ENCODE measurements at regions of chr1 and their contacts with region 1.

Region 1: DNA sequence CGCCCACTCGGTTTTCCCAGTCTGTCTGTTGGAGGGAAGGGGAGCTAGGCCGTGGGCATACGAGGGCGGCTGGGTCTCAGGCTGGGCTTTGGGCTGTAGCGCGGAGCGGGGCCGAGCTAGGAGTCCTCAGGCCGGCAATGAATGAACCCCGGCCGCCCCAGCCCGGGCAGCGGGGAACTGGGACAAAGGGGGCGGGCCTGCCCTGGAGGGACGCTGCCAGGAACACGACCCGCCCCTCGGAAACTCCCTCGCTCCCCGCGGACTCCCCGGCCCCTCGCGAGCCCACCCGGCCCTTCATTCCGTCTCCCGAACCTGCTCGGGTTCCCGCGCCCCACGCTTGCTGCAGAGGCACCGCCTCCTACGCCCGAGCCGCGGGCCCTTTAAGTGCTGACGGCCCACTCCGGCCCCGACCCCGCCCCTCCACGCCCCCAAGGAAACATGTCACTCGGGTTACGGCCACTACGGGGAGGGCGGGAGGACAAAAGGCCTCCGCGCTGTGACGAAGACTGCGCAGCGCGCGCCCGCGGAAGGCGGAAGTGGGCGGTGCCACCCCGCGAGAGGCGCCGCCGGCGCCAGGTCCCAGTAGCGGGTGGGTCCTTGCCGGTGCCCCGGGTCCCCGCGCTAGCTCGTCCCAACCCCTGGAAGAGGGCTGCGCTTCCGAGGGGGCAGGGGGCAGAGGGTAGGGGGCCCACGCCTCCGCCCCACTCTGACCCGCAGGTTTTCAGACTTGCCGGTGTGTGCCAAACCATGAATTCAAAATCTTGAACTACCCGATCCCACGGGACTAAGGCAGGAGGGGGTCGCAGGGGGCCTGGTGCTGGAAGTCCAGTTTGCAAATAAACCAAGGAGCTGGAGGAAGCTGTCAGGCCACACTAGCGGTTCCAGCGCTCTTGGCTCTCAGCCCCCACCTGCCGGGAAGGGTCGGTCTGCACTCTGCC is at the start of gene GALE:
- DNase-seq: peak; percentile 94
- H3K4me3 ChIP-seq: peak within 1 kb of the TSS; percentile 72 to 89 (median 77)
- H3K27ac ChIP-seq: peak within 1 kb of the TSS; percentile 75
- H3K4me1 ChIP-seq: peaks cover 21% of the 10 kb centered on the region
- H3K27me3 ChIP-seq: no peaks in the 10 kb centered on the region
- CTCF ChIP-seq: no peak
- total RNA-seq, gene GALE: 24.2 to 84.5 TPM

Region 2: GRCh38 chr1:23777979-23778814 is 22.5 kb before region 1 on chr1 and contains the start of gene PITHD1:
- CTCF ChIA-PET with region 1: no interaction called
- dilution Hi-C with region 1: no loop called
- in situ Hi-C with region 1: no loop called
- intact Hi-C with region 1: loop called (anchors 2 kb)
- DNase-seq: peak; percentile 81
- H3K4me3 ChIP-seq: peak within 1 kb of the TSS; percentile 57 to 82 (median 75)
- H3K27ac ChIP-seq: peak within 1 kb of the TSS; percentile 86
- H3K4me1 ChIP-seq: peaks cover 20% of the 10 kb centered on the region
- H3K27me3 ChIP-seq: no peaks in the 10 kb centered on the region
- CTCF ChIP-seq: no peak
- total RNA-seq, gene PITHD1: 39.7 to 44.0 TPM

Region 3: DNA sequence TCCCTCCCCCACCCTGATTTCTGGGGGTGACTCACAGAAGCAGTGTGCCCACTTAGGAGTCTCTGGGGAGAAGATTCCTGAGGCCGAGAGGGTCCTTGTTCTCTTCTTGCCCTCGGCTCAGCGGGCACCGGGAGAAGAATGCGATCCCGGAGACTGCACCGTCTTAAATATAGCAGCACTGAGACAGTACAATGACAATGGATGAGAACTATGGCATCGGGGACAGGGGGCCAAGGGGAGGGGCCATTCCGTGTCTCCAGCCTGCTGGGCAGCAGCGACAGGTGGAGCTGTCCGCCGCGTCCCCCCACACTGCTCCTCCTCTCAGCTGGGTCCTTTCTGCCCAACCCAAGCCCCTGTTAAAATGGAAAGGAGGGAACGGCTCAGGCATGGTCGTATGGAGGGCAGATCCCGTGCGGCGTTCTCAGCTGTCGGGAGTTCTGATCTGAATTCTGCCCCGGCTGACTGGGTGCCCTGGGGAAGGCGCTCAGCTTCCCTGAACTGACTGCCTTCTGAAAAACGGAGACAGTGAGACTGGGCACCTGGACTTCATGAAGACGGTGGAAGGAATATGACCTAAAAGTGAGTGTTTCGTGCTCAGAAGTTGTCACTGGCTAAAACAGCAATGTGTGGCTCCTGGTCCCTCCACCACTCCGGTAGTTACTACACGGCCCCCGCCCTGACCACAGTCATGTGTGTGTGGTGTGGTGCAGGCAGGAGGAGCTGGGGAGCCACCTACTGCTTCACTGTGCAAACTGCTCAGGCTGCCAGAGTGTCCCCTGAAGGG is 311.5 kb after region 1 on chr1 and contains the start of gene MYOM3:
- CTCF ChIA-PET with region 1: no interaction called
- dilution Hi-C with region 1: no loop called
- in situ Hi-C with region 1: no loop called
- intact Hi-C with region 1: loop called (anchors 10 kb)
- DNase-seq: peak; percentile 77
- H3K4me3 ChIP-seq: peak within 1 kb of the TSS in 1 of 3 experiments; percentile 33
- H3K27ac ChIP-seq: peak within 1 kb of the TSS; percentile 55
- H3K4me1 ChIP-seq: peaks cover 36% of the 10 kb centered on the region
- H3K27me3 ChIP-seq: no peaks in the 10 kb centered on the region
- CTCF ChIP-seq: peak; percentile 61 to 83
- total RNA-seq, gene MYOM3: 0.54 to 1.8 TPM